Activated naive CD8-positive, alpha-beta T cell treated with anti-CD3 and anti-CD28 coated beads, Interleukin-2, amount 10 ng/mL, durations not matched to agents 7 days and 5 days (primary cell): ENCODE measurements at regions of chr19 and their contacts with region 1.

Region 1: DNA sequence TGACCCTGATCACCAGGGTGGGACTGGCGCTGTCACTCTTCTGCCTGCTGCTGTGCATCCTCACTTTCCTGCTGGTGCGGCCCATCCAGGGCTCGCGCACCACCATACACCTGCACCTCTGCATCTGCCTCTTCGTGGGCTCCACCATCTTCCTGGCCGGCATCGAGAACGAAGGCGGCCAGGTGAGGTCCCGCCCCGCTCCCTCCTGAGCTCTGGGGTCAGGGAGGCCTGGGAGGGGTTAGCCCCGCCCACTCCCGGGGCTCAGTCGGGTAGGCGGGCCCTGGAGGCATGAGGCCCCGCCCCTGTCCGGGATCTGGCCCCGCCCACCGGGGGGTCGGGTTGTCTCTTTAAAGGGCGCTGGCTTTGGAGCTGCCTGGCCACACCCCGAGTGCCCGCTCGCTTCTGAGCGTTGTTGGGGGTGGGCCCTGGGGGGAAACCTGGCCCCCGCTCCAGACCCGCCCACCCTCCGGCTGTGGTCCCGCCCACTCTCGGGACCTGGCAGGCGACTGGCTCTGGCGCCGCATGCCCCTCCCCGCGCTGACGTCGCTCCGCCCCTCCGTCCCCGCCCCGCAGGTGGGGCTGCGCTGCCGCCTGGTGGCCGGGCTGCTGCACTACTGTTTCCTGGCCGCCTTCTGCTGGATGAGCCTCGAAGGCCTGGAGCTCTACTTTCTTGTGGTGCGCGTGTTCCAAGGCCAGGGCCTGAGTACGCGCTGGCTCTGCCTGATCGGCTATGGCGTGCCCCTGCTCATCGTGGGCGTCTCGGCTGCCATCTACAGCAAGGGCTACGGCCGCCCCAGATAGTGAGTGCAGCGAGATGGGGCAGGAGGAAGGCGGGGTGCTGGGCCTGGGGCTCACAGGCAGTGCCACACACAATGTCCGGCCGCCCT is 13.1 kb downstream of the DDX39A start:
- DNase-seq: peak; percentile 97
- ATAC-seq: peak; percentile 66
- H3K4me3 Mint-ChIP-seq: no peak overlapping the region
- H3K27ac Mint-ChIP-seq: peak overlapping the region; percentile 72
- H3K4me1 Mint-ChIP-seq: peaks cover 12% of the 10 kb centered on the region
- H3K27me3 Mint-ChIP-seq: no peaks in the 10 kb centered on the region

Region 2: GRCh38 chr19:14342809-14343208 is 63.2 kb before region 1 on chr19:
- POLR2A ChIA-PET with region 1: no interaction called
- DNase-seq: no peak
- ATAC-seq: no peak
- H3K4me3 Mint-ChIP-seq: no peak overlapping the region
- H3K27ac Mint-ChIP-seq: no peak overlapping the region
- H3K4me1 Mint-ChIP-seq: no peaks in the 10 kb centered on the region
- H3K27me3 Mint-ChIP-seq: no peaks in the 10 kb centered on the region

Region 3: GRCh38 chr19:14366498-14366915 is 39.5 kb before region 1 on chr19:
- POLR2A ChIA-PET with region 1: interaction called, 250 read pairs
- DNase-seq: peak; percentile 83
- ATAC-seq: peak; percentile 54
- H3K4me3 Mint-ChIP-seq: peak overlapping the region; percentile 83
- H3K27ac Mint-ChIP-seq: peak overlapping the region; percentile 91
- H3K4me1 Mint-ChIP-seq: peaks cover 60% of the 10 kb centered on the region
- H3K27me3 Mint-ChIP-seq: no peaks in the 10 kb centered on the region

Region 4: GRCh38 chr19:14395710-14396336 is 10.2 kb before region 1 on chr19:
- POLR2A ChIA-PET with region 1: interaction called, 14 read pairs
- DNase-seq: no peak
- ATAC-seq: no peak
- H3K4me3 Mint-ChIP-seq: no peak overlapping the region
- H3K27ac Mint-ChIP-seq: peak overlapping the region; percentile 21
- H3K4me1 Mint-ChIP-seq: peaks cover 7% of the 10 kb centered on the region
- H3K27me3 Mint-ChIP-seq: no peaks in the 10 kb centered on the region